ENCODE measurements at regions of chr11 and their contacts with region 1.

Region 1: GRCh38 chr11:30917859-30918478 is 331.8 kb upstream of the MPPED2 start:
- DNase-seq: peak; percentile 7
- ATAC-seq: no peak
- H3K4me3 Mint-ChIP-seq: no peak overlapping the region
- H3K27ac Mint-ChIP-seq: no peak overlapping the region
- H3K4me1 Mint-ChIP-seq: no peaks in the 10 kb centered on the region
- H3K27me3 Mint-ChIP-seq: peaks cover 7% of the 10 kb centered on the region
- CTCF ChIP-seq: peak; percentile 67

Region 2: DNA sequence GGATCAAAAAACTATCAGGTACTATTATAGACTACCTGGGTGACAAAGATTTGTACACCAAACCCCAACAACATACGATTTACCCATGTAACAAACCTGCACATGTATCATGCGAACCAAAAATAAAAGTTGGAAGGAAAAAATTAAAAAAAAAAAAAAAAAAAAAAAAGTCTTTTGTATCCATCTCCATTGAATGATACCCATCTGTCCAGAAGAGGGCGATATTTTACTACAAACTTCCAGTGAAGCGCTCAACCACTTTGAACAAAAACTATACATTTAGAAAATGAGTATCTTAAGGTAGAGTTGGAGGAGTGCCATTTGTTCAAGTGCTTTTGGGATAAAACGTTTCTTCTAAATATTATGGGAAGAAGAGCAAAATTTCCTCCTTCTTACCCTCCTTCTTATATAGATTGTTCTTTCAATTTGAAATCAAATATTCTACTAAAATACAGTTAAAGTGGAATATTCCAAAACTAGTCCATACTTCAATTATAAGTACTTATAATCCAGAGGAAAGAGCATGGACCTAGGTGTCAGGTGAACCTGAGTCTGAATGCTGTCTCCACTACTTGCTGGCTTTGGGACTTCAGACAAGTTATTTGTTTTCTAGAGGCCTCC is 571.8 kb before region 1 on chr11:
- CTCF ChIA-PET with region 1: interaction called, 9 read pairs
- POLR2A ChIA-PET with region 1: no interaction called
- intact Hi-C with region 1: loop called (anchors 2 kb)
- DNase-seq: no peak
- ATAC-seq: peak; percentile 66
- H3K4me3 Mint-ChIP-seq: no peak overlapping the region
- H3K27ac Mint-ChIP-seq: no peak overlapping the region
- H3K4me1 Mint-ChIP-seq: peaks cover 15% of the 10 kb centered on the region
- H3K27me3 Mint-ChIP-seq: no peaks in the 10 kb centered on the region
- CTCF ChIP-seq: peak; percentile 67

Region 3: GRCh38 chr11:30729187-30729713 is 188.7 kb before region 1 on chr11:
- CTCF ChIA-PET with region 1: no interaction called
- POLR2A ChIA-PET with region 1: no interaction called
- intact Hi-C with region 1: loop called (anchors 10 kb)
- DNase-seq: no peak
- ATAC-seq: no peak
- H3K4me3 Mint-ChIP-seq: no peak overlapping the region
- H3K27ac Mint-ChIP-seq: no peak overlapping the region
- H3K4me1 Mint-ChIP-seq: no peaks in the 10 kb centered on the region
- H3K27me3 Mint-ChIP-seq: no peaks in the 10 kb centered on the region
- CTCF ChIP-seq: no peak

Region 4: GRCh38 chr11:30902929-30903328 is 15.0 kb before region 1 on chr11:
- CTCF ChIA-PET with region 1: interaction called, 18 read pairs
- POLR2A ChIA-PET with region 1: interaction called, 3 read pairs
- intact Hi-C with region 1: no loop called
- DNase-seq: no peak
- ATAC-seq: no peak
- H3K4me3 Mint-ChIP-seq: no peak overlapping the region
- H3K27ac Mint-ChIP-seq: no peak overlapping the region
- H3K4me1 Mint-ChIP-seq: no peaks in the 10 kb centered on the region
- H3K27me3 Mint-ChIP-seq: no peaks in the 10 kb centered on the region
- CTCF ChIP-seq: no peak

Region 5: GRCh38 chr11:30938171-30938570 is 20.2 kb after region 1 on chr11:
- CTCF ChIA-PET with region 1: no interaction called
- POLR2A ChIA-PET with region 1: no interaction called
- intact Hi-C with region 1: no loop called
- DNase-seq: no peak
- ATAC-seq: no peak
- H3K4me3 Mint-ChIP-seq: no peak overlapping the region
- H3K27ac Mint-ChIP-seq: no peak overlapping the region
- H3K4me1 Mint-ChIP-seq: no peaks in the 10 kb centered on the region
- H3K27me3 Mint-ChIP-seq: peaks cover 2% of the 10 kb centered on the region
- CTCF ChIP-seq: no peak